CD8-positive, alpha-beta T cell (primary cell): ENCODE measurements at regions of chr1 and their contacts with region 1.

Region 1: DNA sequence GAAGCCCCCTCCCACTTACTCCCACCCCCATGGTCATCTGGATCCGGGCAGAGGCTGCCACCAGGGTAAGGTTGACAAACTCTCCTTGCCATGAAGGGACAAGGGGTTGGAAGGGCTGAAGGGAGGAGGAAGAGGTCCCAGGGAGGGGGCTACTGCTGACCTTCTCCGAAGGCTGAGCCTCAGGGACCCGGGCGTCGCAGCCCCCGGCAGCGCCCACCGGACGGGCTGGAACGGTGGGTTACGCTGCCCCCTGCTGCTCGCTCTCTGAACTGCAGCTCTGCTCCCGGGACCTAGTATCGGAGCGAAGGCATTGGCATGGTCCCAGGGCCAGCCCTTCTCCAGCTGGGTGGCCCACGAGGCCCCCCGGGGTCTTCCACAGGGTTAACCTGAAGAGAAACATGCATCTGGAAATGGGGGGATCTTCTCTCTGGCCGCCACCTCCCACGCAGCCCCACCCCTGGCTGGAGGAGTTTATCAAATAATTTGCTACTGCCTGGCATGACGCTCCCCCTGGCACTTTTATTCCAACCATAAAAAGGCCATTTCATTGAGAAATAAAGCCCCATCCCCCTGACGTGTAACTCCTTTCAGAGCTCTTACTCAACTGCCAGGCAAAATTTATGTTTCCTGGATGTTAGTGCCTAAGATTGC is 70.4 kb upstream of the TARDBP start:
- DNase-seq: peak; percentile 47 to 78 (median 70)
- ATAC-seq: peak; percentile 75
- H3K4me3 ChIP-seq: no peak overlapping the region
- H3K4me3 Mint-ChIP-seq: no peak overlapping the region
- H3K27ac ChIP-seq: no peak overlapping the region
- H3K27ac Mint-ChIP-seq: no peak overlapping the region
- H3K4me1 ChIP-seq: peaks cover 43% of the 10 kb centered on the region
- H3K4me1 Mint-ChIP-seq: peaks cover 41% of the 10 kb centered on the region
- H3K27me3 ChIP-seq: peaks cover 6 to 7% of the 10 kb centered on the region in 2 experiments
- H3K27me3 Mint-ChIP-seq: peaks cover 25% of the 10 kb centered on the region
- CTCF ChIP-seq: peak; percentile 82

Region 2: GRCh38 chr1:10143961-10144485 is 798.0 kb before region 1 on chr1:
- CTCF ChIA-PET with region 1: no interaction called
- POLR2A ChIA-PET with region 1: no interaction called
- intact Hi-C with region 1: no loop called
- DNase-seq: no peak
- ATAC-seq: no peak
- H3K4me3 ChIP-seq: no peak overlapping the region
- H3K4me3 Mint-ChIP-seq: no peak overlapping the region
- H3K27ac ChIP-seq: no peak overlapping the region
- H3K27ac Mint-ChIP-seq: no peak overlapping the region
- H3K4me1 ChIP-seq: no peaks in the 10 kb centered on the region
- H3K4me1 Mint-ChIP-seq: no peaks in the 10 kb centered on the region
- H3K27me3 ChIP-seq: no peaks in the 10 kb centered on the region
- H3K27me3 Mint-ChIP-seq: no peaks in the 10 kb centered on the region
- CTCF ChIP-seq: no peak

Region 3: GRCh38 chr1:10867138-10867721 is 74.8 kb before region 1 on chr1:
- CTCF ChIA-PET with region 1: interaction called, 4 read pairs
- POLR2A ChIA-PET with region 1: no interaction called
- intact Hi-C with region 1: loop called in 1 of 2 experiments (anchors 2 kb)
- DNase-seq: peak; percentile 23 to 82 (median 69)
- ATAC-seq: peak; percentile 81
- H3K4me3 ChIP-seq: peak overlapping the region; percentile 21 to 28
- H3K4me3 Mint-ChIP-seq: peak overlapping the region; percentile 57
- H3K27ac ChIP-seq: no peak overlapping the region
- H3K27ac Mint-ChIP-seq: no peak overlapping the region
- H3K4me1 ChIP-seq: peaks cover 12% of the 10 kb centered on the region
- H3K4me1 Mint-ChIP-seq: peaks cover 19% of the 10 kb centered on the region
- H3K27me3 ChIP-seq: peaks cover 2 to 15% of the 10 kb centered on the region in 2 experiments
- H3K27me3 Mint-ChIP-seq: peaks cover 52% of the 10 kb centered on the region
- CTCF ChIP-seq: peak; percentile 74

Region 4: DNA sequence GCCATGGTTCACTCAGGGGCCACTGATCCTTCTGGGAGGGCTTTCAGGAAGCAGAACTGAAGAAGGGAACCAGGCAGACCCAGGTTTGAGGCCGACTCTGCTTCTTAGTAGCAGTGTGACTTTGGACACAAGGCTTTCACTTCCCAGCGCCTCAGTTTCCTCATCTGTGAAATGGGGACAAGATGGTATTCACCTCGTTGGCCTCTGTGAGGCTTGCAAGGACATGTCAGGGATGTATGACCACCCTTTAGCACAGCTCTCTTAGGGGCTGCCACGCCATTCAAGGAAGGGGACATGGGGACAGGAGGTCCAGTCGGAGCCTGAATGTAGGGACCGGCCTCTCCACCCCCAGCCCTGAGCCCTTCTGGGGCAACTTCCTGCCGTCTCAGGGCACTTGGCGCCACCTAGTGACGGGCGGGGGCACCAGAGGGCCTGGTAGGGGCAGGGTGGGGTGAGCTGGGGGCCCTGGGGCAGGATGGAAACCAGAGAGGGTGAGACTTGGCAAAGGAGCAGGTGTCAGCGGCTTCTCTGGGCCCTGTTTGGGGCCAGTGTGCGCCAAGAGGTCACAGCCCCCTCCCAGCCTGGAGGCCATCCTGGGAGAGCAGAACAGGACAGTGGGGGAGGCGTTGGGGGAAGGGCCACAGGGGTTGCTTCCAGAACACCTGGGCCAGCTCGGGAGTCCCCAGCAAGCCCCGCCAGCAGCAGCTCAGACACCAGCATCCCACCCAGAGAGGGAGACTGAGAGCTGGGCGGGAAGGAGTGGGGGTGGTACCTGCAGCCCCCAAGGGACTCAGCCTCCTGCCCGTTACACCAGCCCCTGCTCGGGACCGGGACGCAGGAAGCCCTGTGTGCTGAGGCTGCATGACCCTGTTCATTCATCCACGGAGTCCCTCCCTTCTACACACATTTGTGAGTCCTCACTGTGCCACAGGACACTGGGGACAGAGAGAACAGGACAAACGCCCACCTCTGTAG is 32.0 kb before region 1 on chr1:
- CTCF ChIA-PET with region 1: interaction called, 10 read pairs
- POLR2A ChIA-PET with region 1: interaction called, 6 read pairs
- intact Hi-C with region 1: no loop called
- DNase-seq: peak; percentile 64 to 87 (median 81)
- ATAC-seq: peak; percentile 95
- H3K4me3 ChIP-seq: no peak overlapping the region
- H3K4me3 Mint-ChIP-seq: no peak overlapping the region
- H3K27ac ChIP-seq: no peak overlapping the region
- H3K27ac Mint-ChIP-seq: no peak overlapping the region
- H3K4me1 ChIP-seq: peaks cover 29% of the 10 kb centered on the region
- H3K4me1 Mint-ChIP-seq: peaks cover 14% of the 10 kb centered on the region
- H3K27me3 ChIP-seq: no peaks in the 10 kb centered on the region
- H3K27me3 Mint-ChIP-seq: no peaks in the 10 kb centered on the region
- CTCF ChIP-seq: peak; percentile 66